Posterior vena cava (tissue), 2 donors: ENCODE measurements at regions of chr5 and their contacts with region 1.

Region 1: DNA sequence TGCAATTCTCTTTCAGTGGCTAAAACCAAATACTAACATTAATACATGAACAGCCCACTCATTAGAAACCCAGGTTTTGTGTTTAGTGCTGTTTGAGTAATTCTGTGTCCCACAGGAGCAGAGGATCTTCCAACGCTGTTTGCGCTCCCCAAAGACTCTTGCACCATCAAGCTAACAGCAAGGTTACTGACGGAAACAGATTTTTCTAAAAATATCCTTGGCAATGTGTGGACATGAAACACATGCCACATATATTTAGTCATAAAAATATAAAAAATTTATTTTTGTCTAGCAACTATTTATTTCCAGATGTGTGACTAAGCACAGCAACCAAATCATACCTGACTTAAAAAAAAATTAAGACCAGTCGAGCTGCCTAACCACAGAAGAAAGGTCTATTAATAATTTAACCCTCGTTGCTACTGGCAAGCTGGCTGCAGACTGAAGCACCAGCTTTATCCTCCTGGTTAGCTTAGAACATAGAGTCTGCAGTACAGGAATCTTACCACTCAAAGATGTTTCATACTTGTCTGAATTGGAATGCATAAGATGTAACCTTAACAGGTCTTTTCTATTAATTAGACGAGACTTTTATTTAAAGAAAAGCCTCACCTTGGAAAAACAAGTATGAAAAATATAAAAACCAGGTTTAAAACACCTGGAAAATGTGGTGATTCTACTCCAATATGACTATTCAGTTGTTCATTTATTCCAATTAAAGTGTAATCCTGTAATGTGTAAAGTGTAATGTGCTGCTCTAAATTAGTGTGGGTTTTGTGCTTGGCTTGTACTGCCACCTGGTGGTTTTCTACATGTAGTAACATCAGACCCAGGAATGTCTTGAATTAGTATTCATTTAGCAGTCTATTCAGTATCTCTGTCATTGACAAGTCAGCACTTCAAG is 272.5 kb downstream of the EPB41L4A start:
- DNase-seq: no peak

Region 2: DNA sequence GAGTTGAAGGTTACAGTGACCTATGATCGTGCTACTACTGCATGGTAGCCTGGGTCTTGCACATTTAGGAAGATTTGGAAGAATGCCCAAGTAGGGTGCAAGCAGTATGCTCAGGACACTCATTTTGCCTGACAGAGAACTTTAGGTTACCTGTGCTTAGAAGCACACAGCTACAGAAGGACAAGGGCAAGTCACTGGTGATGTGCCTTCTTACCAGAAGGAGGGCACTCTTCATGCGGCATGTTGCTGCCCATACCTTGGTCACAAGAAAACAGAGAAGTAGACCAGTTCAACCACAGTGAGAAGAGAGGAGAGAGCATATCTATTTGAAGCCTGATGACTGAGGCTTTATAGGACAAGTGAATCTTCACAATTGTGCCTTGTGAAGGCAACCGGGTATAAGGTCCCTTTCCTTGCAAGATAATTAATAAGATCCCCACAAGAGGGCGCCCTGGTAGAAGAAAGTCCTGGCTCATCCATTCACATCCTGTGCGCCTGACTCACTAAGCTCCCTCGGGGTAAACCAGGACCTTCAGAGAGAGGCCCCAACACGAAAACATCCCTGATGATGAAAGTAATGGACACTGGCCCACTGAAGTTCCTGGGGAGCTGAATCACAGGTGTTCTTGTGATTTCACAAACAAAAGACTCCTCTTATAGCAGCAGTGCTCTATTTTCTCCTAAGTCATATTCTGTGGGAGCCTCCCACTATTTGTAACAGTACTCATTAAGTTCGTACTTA is 596.1 kb before region 1 on chr5:
- intact Hi-C with region 1: loop called (anchors 2 to 5 kb)
- DNase-seq: peak; percentile 87

Region 3: GRCh38 chr5:112125903-112126302 is 20.7 kb before region 1 on chr5:
- intact Hi-C with region 1: no loop called
- DNase-seq: no peak